ENCODE measurements at regions of chr14 and their contacts with region 1.

Region 1: GRCh38 chr14:102235275-102235897 is 69.6 kb downstream of the MOK start:
- DNase-seq: peak; percentile 87
- H3K4me3 ChIP-seq: peak overlapping the region in 1 of 2 donors; percentile 6
- H3K27ac ChIP-seq: peak overlapping the region; percentile 51 to 52
- H3K4me1 ChIP-seq: peaks cover 0 to 3% of the 10 kb centered on the region in 2 donors
- H3K27me3 ChIP-seq: no peaks in the 10 kb centered on the region
- CTCF ChIP-seq: peak; percentile 69 to 84 (median 79)
- POLR2A ChIP-seq: no peak

Region 2: DNA sequence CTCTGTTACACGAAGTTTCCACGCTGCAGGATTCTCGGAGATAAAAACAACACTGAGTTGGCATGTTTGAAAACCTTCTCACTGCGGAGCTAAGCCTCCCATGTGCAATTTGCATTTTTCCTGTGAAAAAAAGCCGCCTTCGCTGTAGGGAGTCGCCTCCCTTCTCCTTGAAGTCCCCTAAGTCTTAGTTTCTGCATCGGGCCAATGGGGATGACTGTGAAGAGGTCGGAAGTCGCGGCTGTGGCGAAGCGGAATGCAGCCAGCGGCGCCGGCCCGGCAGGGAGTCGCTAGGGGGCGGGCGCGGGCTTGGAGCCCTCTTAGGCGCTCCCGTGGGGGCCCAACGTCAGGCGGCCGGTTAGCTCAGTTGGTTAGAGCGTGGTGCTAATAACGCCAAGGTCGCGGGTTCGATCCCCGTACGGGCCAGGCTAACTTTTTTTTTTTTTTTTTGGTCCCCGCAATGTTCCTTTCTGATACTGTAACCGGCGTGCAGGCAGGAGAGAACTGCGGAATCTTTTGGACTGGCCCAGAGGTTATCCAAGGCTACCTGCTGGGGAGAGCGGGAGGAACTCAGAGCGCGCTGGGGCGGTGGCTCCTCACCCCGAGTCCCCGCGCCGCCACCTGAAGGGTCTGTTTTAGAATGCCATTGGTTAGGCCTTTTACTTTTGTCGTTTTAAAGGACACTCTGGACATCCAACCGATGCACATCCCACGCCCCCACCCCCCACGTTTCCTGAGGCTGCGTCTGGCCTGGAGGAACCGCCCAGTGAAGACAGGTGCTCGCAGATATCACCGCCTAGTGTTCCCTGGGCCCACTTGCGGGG is 81.6 kb after region 1 on chr14:
- intact Hi-C with region 1: loop called (anchors 10 kb)
- DNase-seq: peak; percentile 88 to 92
- H3K4me3 ChIP-seq: peak overlapping the region; percentile 28 to 35
- H3K27ac ChIP-seq: peak overlapping the region; percentile 96 to 98
- H3K4me1 ChIP-seq: peaks cover 0 to 4% of the 10 kb centered on the region in 2 donors
- H3K27me3 ChIP-seq: no peaks in the 10 kb centered on the region
- CTCF ChIP-seq: peak; percentile 83 to 95 (median 92)
- POLR2A ChIP-seq: peak in 1 of 2 donors; percentile 5